CD14-positive monocyte (primary cell): ENCODE measurements at regions of chr11 and their contacts with region 1.

Region 1: GRCh38 chr11:7665473-7666291 is 7.6 kb downstream of the CYB5R2 start:
- DNase-seq: peak; percentile 67 to 76 (median 70)
- H3K4me3 ChIP-seq: no peak overlapping the region
- H3K4me3 Mint-ChIP-seq: no peak overlapping the region
- H3K27ac ChIP-seq: no peak overlapping the region
- H3K27ac Mint-ChIP-seq: peak overlapping the region in 1 of 7 donors; percentile 65
- H3K4me1 ChIP-seq: peaks cover 7 to 8% of the 10 kb centered on the region in 2 donors
- H3K4me1 Mint-ChIP-seq: peaks cover 9% of the 10 kb centered on the region
- H3K27me3 ChIP-seq: no peaks in the 10 kb centered on the region
- H3K27me3 Mint-ChIP-seq: peaks cover 6 to 11% (median 7%) of the 10 kb centered on the region in 3 donors
- CTCF ChIP-seq: peak; percentile 97

Region 2: GRCh38 chr11:7098235-7098832 is 567.3 kb before region 1 on chr11:
- intact Hi-C with region 1: loop called in 1 of 2 experiments (anchors 10 kb)
- DNase-seq: peak; percentile 12 to 40 (median 28)
- H3K4me3 ChIP-seq: no peak overlapping the region
- H3K4me3 Mint-ChIP-seq: no peak overlapping the region
- H3K27ac ChIP-seq: no peak overlapping the region
- H3K27ac Mint-ChIP-seq: no peak overlapping the region
- H3K4me1 ChIP-seq: no peaks in the 10 kb centered on the region
- H3K4me1 Mint-ChIP-seq: no peaks in the 10 kb centered on the region
- H3K27me3 ChIP-seq: peaks cover 0 to 5% of the 10 kb centered on the region in 2 donors
- H3K27me3 Mint-ChIP-seq: peaks cover 3 to 13% (median 4%) of the 10 kb centered on the region in 3 donors
- CTCF ChIP-seq: peak; percentile 62

Region 3: GRCh38 chr11:7495882-7496551 is 169.7 kb before region 1 on chr11:
- intact Hi-C with region 1: loop called in 1 of 2 experiments (anchors 10 kb)
- DNase-seq: peak; percentile 81 to 92 (median 91)
- H3K4me3 ChIP-seq: no peak overlapping the region
- H3K4me3 Mint-ChIP-seq: peak overlapping the region in 1 of 2 donors; percentile 9
- H3K27ac ChIP-seq: peak overlapping the region; percentile 23 to 71
- H3K27ac Mint-ChIP-seq: peak overlapping the region; percentile 73 to 94 (median 87)
- H3K4me1 ChIP-seq: peaks cover 34 to 36% of the 10 kb centered on the region in 2 donors
- H3K4me1 Mint-ChIP-seq: peaks cover 33% of the 10 kb centered on the region
- H3K27me3 ChIP-seq: no peaks in the 10 kb centered on the region
- H3K27me3 Mint-ChIP-seq: peaks cover 0 to 3% (median 3%) of the 10 kb centered on the region in 3 donors
- CTCF ChIP-seq: no peak

Region 4: GRCh38 chr11:7571640-7572000 is 94.1 kb before region 1 on chr11:
- intact Hi-C with region 1: loop called (anchors 5 kb)
- DNase-seq: peak in 2 of 3 donors; percentile 52 to 54
- H3K4me3 ChIP-seq: no peak overlapping the region
- H3K4me3 Mint-ChIP-seq: no peak overlapping the region
- H3K27ac ChIP-seq: no peak overlapping the region
- H3K27ac Mint-ChIP-seq: peak overlapping the region in 1 of 7 donors; percentile 36
- H3K4me1 ChIP-seq: peaks cover 0 to 21% of the 10 kb centered on the region in 2 donors
- H3K4me1 Mint-ChIP-seq: peaks cover 27% of the 10 kb centered on the region
- H3K27me3 ChIP-seq: peaks cover 0 to 28% of the 10 kb centered on the region in 2 donors
- H3K27me3 Mint-ChIP-seq: peaks cover 18 to 36% (median 32%) of the 10 kb centered on the region in 3 donors
- CTCF ChIP-seq: peak; percentile 90

Region 5: GRCh38 chr11:7600205-7600775 is 65.4 kb before region 1 on chr11:
- intact Hi-C with region 1: no loop called
- DNase-seq: peak; percentile 59 to 72 (median 68)
- H3K4me3 ChIP-seq: peak overlapping the region in 1 of 3 experiments; percentile 29
- H3K4me3 Mint-ChIP-seq: peak overlapping the region in 1 of 2 donors; percentile 9
- H3K27ac ChIP-seq: peak overlapping the region; percentile 29 to 59
- H3K27ac Mint-ChIP-seq: peak overlapping the region; percentile 1 to 87 (median 74)
- H3K4me1 ChIP-seq: peaks cover 16 to 43% of the 10 kb centered on the region in 2 donors
- H3K4me1 Mint-ChIP-seq: peaks cover 33% of the 10 kb centered on the region
- H3K27me3 ChIP-seq: no peaks in the 10 kb centered on the region
- H3K27me3 Mint-ChIP-seq: peaks cover 0 to 5% (median 0%) of the 10 kb centered on the region in 3 donors
- CTCF ChIP-seq: no peak